Adrenal gland (tissue), 19 donors: ENCODE measurements at regions of chr6 and their contacts with region 1.

Region 1: GRCh38 chr6:37705239-37706051 is 7.8 kb upstream of the MDGA1 start:
- DNase-seq: peak; percentile 86 to 92 (median 88)
- H3K4me3 ChIP-seq: peak overlapping the region in 2 of 4 donors; percentile 41 to 66
- H3K27ac ChIP-seq: peak overlapping the region in 3 of 5 donors; percentile 56 to 89 (median 84)
- H3K4me1 ChIP-seq: peaks cover 0 to 14% of the 10 kb centered on the region in 2 donors
- H3K27me3 ChIP-seq: no peaks in the 10 kb centered on the region
- CTCF ChIP-seq: peak; percentile 62 to 79 (median 76)
- POLR2A ChIP-seq: no peak

Region 2: GRCh38 chr6:37680668-37681067 is 24.8 kb before region 1 on chr6:
- intact Hi-C with region 1: no loop called
- DNase-seq: no peak
- H3K4me3 ChIP-seq: no peak overlapping the region
- H3K27ac ChIP-seq: no peak overlapping the region
- H3K4me1 ChIP-seq: peaks cover 0 to 11% of the 10 kb centered on the region in 2 donors
- H3K27me3 ChIP-seq: no peaks in the 10 kb centered on the region
- CTCF ChIP-seq: no peak
- POLR2A ChIP-seq: no peak

Region 3: GRCh38 chr6:38012573-38012972 is 307.1 kb after region 1 on chr6:
- intact Hi-C with region 1: loop called in 1 of 2 experiments (anchors 10 kb)
- DNase-seq: peak in 2 of 7 donors; percentile 15 to 20
- H3K4me3 ChIP-seq: no peak overlapping the region
- H3K27ac ChIP-seq: no peak overlapping the region
- H3K4me1 ChIP-seq: no peaks in the 10 kb centered on the region
- H3K27me3 ChIP-seq: no peaks in the 10 kb centered on the region
- CTCF ChIP-seq: peak; percentile 46 to 72 (median 64)
- POLR2A ChIP-seq: no peak

Region 4: GRCh38 chr6:38039502-38039901 is 334.1 kb after region 1 on chr6:
- intact Hi-C with region 1: no loop called
- DNase-seq: no peak
- H3K4me3 ChIP-seq: no peak overlapping the region
- H3K27ac ChIP-seq: no peak overlapping the region
- H3K4me1 ChIP-seq: peaks cover 0 to 18% of the 10 kb centered on the region in 2 donors
- H3K27me3 ChIP-seq: no peaks in the 10 kb centered on the region
- CTCF ChIP-seq: no peak
- POLR2A ChIP-seq: no peak

Region 5: DNA sequence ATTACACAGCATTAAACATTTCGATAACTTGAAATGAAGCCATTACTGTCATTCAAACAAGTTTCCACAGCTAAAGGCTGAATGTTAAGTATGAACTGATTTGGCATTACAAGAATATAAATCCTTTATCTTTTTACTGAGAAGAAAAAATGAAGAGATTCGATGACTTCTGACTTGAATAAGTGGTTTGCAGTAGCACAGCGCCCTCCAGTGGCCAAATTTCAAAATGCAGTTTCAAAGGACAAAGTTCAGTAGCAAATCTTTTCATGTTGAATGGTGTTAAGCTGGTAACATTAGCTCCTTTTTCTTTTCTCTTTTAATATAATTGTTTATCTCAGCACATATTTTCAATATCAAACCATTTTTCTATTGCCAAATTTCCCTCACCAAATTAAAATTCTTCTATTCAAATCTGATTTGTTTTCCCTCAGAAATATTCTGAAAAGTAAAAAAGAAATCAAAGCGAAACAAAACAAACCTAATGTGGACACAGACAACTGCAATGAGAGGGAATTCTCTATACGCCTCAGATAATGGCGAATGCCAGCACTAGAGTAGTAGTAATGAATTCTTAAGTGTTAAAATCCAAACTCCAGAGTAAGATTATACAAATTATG is 788.6 kb after region 1 on chr6:
- intact Hi-C with region 1: loop called in 1 of 2 experiments (anchors 10 kb)
- DNase-seq: peak; percentile 60 to 97 (median 80)
- H3K4me3 ChIP-seq: no peak overlapping the region
- H3K27ac ChIP-seq: no peak overlapping the region
- H3K4me1 ChIP-seq: peaks cover 0 to 6% of the 10 kb centered on the region in 2 donors
- H3K27me3 ChIP-seq: no peaks in the 10 kb centered on the region
- CTCF ChIP-seq: peak; percentile 91 to 98 (median 94)
- POLR2A ChIP-seq: no peak